Activated CD4-positive, alpha-beta memory T cell treated with anti-CD3 and anti-CD28 coated beads for 36 hours (primary cell): ENCODE measurements at regions of chr5 and their contacts with region 1.

Region 1: GRCh38 chr5:73088026-73088425 is 32.3 kb upstream of the TMEM171 start:
- DNase-seq: no peak
- H3K4me3 Mint-ChIP-seq: no peak overlapping the region
- H3K27ac Mint-ChIP-seq: no peak overlapping the region
- H3K4me1 Mint-ChIP-seq: no peaks in the 10 kb centered on the region
- H3K27me3 Mint-ChIP-seq: peaks cover 3% of the 10 kb centered on the region

Region 2: GRCh38 chr5:73106335-73106734 is 18.3 kb after region 1 on chr5:
- CTCF ChIA-PET with region 1: no interaction called
- POLR2A ChIA-PET with region 1: no interaction called
- intact Hi-C with region 1: no loop called
- DNase-seq: no peak
- H3K4me3 Mint-ChIP-seq: no peak overlapping the region
- H3K27ac Mint-ChIP-seq: no peak overlapping the region
- H3K4me1 Mint-ChIP-seq: no peaks in the 10 kb centered on the region
- H3K27me3 Mint-ChIP-seq: peaks cover 36% of the 10 kb centered on the region

Region 3: GRCh38 chr5:73170522-73170921 is 82.5 kb after region 1 on chr5:
- CTCF ChIA-PET with region 1: interaction called, 17 read pairs
- POLR2A ChIA-PET with region 1: no interaction called
- intact Hi-C with region 1: no loop called
- DNase-seq: peak; percentile 43
- H3K4me3 Mint-ChIP-seq: no peak overlapping the region
- H3K27ac Mint-ChIP-seq: no peak overlapping the region
- H3K4me1 Mint-ChIP-seq: no peaks in the 10 kb centered on the region
- H3K27me3 Mint-ChIP-seq: peaks cover 88% of the 10 kb centered on the region